MCF 10A (cell line): ENCODE measurements at regions of chr14 and their contacts with region 1.

Region 1: DNA sequence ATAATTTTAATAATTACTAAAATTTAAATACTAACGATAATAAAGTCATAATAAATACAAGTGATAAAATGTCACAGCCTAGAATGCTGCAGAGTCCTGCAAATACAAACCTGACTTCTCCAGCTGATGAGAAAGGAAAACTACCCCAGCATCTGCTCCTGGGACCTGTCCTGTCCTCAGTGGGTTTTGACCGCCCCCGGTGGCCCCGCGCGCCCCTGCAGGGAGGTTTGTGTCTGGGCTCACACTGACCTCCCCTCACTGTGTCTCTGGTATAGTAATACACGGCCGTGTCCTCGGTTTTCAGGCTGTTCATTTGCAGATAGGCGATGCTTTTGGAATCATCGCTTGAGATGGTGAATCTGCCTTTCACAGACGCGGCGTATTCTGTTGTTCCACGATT is 1139.4 kb downstream of the TMEM121 start:
- DNase-seq: no peak
- H3K4me3 Mint-ChIP-seq: no peak overlapping the region
- H3K27ac Mint-ChIP-seq: no peak overlapping the region
- H3K4me1 Mint-ChIP-seq: no peaks in the 10 kb centered on the region
- H3K27me3 Mint-ChIP-seq: peaks cover 59% of the 10 kb centered on the region
- CTCF ChIP-seq: no peak

Region 2: GRCh38 chr14:106395456-106396050 is 270.3 kb before region 1 on chr14:
- CTCF ChIA-PET with region 1: no interaction called
- POLR2A ChIA-PET with region 1: no interaction called
- intact Hi-C with region 1: no loop called
- DNase-seq: peak; percentile 4
- H3K4me3 Mint-ChIP-seq: no peak overlapping the region
- H3K27ac Mint-ChIP-seq: no peak overlapping the region
- H3K4me1 Mint-ChIP-seq: no peaks in the 10 kb centered on the region
- H3K27me3 Mint-ChIP-seq: peaks cover 22% of the 10 kb centered on the region
- CTCF ChIP-seq: no peak

Region 3: DNA sequence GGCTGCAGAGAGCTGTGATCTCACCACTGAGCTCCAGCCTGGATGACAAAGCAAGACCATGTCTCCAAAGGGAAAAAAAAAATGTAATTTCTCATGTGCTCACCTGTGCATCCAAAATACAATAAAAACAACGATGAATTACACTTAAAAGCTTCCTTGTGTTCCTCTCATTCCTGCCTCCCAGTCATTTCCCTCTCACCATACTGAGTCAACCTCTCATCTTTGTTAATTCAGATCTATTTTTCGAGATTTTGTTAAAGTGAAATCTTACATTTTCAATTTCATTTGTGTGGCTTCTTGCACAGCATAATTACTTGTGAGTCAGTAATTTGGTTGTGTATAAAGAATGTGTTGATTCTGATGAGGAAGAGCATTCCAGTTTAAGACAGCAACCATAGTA is 63.7 kb after region 1 on chr14:
- CTCF ChIA-PET with region 1: interaction called, 3 read pairs
- POLR2A ChIA-PET with region 1: no interaction called
- intact Hi-C with region 1: loop called (anchors 10 kb)
- DNase-seq: no peak
- H3K4me3 Mint-ChIP-seq: no peak overlapping the region
- H3K27ac Mint-ChIP-seq: no peak overlapping the region
- H3K4me1 Mint-ChIP-seq: no peaks in the 10 kb centered on the region
- H3K27me3 Mint-ChIP-seq: peaks cover 64% of the 10 kb centered on the region
- CTCF ChIP-seq: no peak